ENCODE measurements at regions of chr5 and their contacts with region 1.

Region 1: GRCh38 chr5:6251565-6252102 is 126.7 kb downstream of the MED10 start:
- DNase-seq: no peak
- H3K4me3 ChIP-seq: no peak overlapping the region
- CTCF ChIP-seq: no peak

Region 2: DNA sequence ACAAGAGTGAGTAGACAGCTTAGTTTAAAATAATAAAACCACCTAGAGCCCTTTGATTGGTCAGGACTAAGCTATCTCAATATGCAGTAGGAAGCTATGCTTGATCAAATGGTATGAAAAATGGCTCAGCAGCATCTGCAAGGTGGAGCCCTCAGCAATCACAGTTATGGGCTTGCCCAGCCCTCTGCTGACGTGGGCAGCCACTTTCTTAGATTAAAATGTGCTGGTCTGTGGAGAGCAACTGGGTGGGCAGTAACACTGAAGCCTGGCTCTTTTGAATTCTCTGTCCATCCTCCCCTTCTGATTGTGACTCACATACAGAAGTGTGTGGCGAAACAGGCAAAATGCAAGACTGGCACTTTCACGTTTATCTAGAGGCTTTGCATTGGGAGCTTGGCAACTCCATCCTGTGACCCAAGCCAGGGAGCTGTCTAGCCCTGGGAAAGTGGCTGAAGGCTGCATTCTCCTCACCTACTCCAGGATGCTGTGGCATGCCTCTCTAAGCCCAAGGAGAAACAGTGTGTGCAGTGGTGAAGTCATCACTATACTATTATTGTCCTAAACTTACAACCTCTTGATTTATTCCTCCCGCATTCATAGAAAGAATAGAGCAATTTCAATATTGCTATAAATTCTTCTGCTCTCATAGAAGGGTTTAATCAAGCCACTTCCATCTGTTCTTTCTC is 65.6 kb after region 1 on chr5:
- in situ Hi-C with region 1: loop called (anchors 5 kb)
- DNase-seq: no peak
- H3K4me3 ChIP-seq: no peak overlapping the region
- CTCF ChIP-seq: no peak

Measured in astrocyte of the cerebellum (primary cell).